GM18951 (cell line): ENCODE measurements at regions of chr5 and their contacts with region 1.

Region 1: GRCh38 chr5:60287174-60287771 is 393.7 kb upstream of the PDE4D start:
- POLR2A ChIP-seq: no peak

Region 2: GRCh38 chr5:60668686-60669304 is 381.5 kb after region 1 on chr5:
- in situ Hi-C with region 1: loop called (anchors 25 kb)
- POLR2A ChIP-seq: no peak

Region 3: GRCh38 chr5:60710373-60710772 is 423.1 kb after region 1 on chr5:
- in situ Hi-C with region 1: no loop called
- POLR2A ChIP-seq: no peak